MCF 10A (cell line): ENCODE measurements at regions of chr4 and their contacts with region 1.

Region 1: DNA sequence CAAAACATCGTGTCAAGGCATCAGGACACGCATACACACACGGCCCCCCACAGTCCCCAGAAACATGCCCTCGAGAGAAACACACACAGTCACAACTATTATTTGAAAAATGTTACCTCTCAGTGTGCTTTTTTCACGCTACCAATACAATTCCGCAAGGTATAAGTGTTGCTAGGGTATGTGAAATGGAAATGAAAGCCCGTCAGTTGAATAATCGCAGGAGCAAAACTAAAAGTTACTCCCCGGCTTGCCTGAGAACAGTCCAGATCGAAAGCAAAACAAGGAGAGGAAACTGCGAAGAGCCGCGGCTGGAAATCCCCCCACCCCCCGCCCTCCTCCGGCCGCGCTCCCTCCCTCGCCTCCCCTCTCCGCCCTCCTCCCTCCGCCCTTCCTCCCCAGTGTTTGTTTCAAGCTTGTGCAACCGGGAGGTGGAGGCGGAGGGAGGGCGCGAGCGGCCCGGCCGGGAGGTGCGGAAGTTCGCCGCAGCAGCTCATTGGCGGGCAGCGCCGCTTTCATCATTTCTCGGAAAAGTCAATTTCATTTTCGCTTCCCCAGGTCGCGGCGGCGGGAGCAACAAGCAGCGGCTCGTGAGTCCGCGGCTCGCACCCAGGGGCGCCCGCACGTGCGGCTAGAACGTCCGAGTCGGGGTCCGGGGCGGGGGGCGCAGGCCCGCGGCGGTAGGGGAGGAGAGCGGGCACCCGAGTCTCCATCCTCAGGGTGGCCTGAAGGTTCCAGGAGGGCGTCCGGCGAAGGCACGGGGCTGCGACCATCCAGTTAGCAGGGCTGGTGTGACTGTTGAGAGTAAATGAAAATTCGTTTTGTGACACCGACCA is at the start of gene IRF2:
- DNase-seq: peak; percentile 98
- H3K4me3 Mint-ChIP-seq: peak within 1 kb of the TSS; percentile 99
- H3K27ac Mint-ChIP-seq: peak within 1 kb of the TSS; percentile 98
- H3K4me1 Mint-ChIP-seq: peaks cover 23% of the 10 kb centered on the region
- H3K27me3 Mint-ChIP-seq: no peaks in the 10 kb centered on the region
- CTCF ChIP-seq: no peak
- total RNA-seq, gene IRF2: 20.8 and 29.0 TPM in 2 replicates

Region 2: DNA sequence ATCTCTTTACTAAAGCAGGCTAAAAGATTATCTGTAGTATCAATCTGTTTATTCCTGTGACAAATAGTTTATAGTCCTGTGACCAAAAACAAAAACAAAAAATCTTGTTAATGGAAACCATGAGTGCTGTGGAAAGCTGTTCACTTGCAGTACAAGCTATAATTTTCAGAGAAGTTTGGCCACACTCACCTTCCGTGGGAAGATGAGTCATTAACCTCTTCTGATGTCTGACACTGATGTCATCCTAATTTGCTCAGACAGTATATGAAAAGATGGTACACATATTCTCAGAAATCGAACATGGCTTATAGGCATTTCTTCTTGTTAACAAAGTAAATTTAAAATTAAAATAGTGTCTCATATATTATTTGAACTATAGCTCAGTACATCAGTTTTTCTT is 236.9 kb before region 1 on chr4:
- CTCF ChIA-PET with region 1: no interaction called
- POLR2A ChIA-PET with region 1: no interaction called
- intact Hi-C with region 1: no loop called
- DNase-seq: peak; percentile 15
- H3K4me3 Mint-ChIP-seq: no peak overlapping the region
- H3K27ac Mint-ChIP-seq: no peak overlapping the region
- H3K4me1 Mint-ChIP-seq: no peaks in the 10 kb centered on the region
- H3K27me3 Mint-ChIP-seq: no peaks in the 10 kb centered on the region
- CTCF ChIP-seq: no peak

Region 3: DNA sequence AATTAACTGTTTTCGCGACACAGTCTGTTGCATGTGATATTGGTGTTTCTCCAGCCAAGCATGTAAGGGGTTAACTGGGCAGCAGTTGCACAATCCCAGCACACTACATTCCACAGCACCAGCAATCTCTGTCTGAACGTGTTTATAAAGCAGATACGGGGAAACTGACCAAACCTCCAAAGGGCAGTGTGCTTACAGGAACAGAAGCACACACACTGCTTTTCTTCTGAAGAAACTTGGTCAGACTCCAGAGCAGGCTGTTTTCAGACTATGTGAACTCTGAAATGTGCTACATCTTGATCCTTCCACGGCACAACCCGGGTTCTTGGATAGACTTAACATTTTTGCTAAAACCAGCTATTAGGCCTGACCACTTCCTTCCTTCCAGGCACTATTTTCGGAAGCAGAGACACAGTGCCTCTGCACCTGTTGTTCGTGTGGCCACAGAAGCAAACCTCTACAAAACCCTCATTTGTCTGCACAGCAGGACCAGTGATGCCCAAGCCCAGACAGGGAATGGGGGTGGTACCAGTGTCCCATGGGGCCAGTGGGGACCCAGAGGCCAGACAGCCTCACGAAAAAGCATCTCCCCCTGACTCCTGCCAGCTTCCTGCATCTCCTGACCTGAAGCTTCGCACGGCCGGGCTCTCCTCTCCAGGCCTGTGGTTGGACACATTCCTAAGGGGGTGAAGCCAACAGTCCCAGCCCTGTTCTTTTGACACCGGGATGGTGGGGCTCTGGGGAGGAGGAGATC is 90.2 kb before region 1 on chr4:
- CTCF ChIA-PET with region 1: no interaction called
- POLR2A ChIA-PET with region 1: interaction called, 31 read pairs
- intact Hi-C with region 1: loop called (anchors 1 kb)
- DNase-seq: peak; percentile 95
- H3K4me3 Mint-ChIP-seq: peak overlapping the region; percentile 68
- H3K27ac Mint-ChIP-seq: peak overlapping the region; percentile 75
- H3K4me1 Mint-ChIP-seq: peaks cover 28% of the 10 kb centered on the region
- H3K27me3 Mint-ChIP-seq: no peaks in the 10 kb centered on the region
- CTCF ChIP-seq: no peak

Region 4: DNA sequence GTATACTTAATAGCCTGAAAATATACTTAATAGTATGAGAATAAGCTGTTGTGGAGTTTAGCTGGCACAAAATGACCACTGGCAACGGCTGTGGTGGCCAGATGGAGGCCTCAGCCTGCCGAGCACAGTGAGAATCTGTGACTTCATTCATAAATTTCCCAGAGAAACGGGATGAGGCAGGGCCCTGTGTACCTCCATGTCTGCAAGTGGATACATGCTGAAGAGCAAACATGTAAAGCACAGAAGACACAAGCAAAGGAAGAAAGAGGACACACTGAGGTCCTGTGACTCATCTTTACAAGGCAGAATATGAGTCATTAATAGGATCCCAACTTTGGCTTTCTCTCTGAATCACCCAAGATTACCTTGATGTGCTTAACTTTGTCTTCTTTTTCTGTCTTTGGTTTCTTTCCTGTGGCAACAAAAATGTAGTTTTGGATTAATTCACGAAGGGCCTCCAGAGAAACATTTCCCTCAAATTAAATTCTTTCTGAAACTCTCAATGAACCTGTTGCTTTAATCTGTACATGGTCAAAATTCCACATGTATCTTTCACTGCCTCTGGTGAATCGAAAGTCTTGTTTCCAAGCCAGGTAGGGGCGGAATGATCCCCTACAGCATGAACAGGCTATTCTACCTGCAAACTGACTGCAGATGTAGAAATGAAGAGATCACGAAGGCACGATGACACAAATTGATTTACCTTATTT is 56.5 kb before region 1 on chr4:
- CTCF ChIA-PET with region 1: interaction called, 3 read pairs
- POLR2A ChIA-PET with region 1: interaction called, 27 read pairs
- intact Hi-C with region 1: loop called (anchors 5 kb)
- DNase-seq: peak; percentile 95
- H3K4me3 Mint-ChIP-seq: peak overlapping the region; percentile 47
- H3K27ac Mint-ChIP-seq: peak overlapping the region; percentile 47
- H3K4me1 Mint-ChIP-seq: peaks cover 24% of the 10 kb centered on the region
- H3K27me3 Mint-ChIP-seq: no peaks in the 10 kb centered on the region
- CTCF ChIP-seq: no peak

Region 5: GRCh38 chr4:184514121-184514988 is 39.9 kb after region 1 on chr4:
- CTCF ChIA-PET with region 1: interaction called, 8 read pairs
- POLR2A ChIA-PET with region 1: interaction called, 38 read pairs
- intact Hi-C with region 1: no loop called
- DNase-seq: peak; percentile 53
- H3K4me3 Mint-ChIP-seq: no peak overlapping the region
- H3K27ac Mint-ChIP-seq: no peak overlapping the region
- H3K4me1 Mint-ChIP-seq: no peaks in the 10 kb centered on the region
- H3K27me3 Mint-ChIP-seq: no peaks in the 10 kb centered on the region
- CTCF ChIP-seq: no peak

Region 6: DNA sequence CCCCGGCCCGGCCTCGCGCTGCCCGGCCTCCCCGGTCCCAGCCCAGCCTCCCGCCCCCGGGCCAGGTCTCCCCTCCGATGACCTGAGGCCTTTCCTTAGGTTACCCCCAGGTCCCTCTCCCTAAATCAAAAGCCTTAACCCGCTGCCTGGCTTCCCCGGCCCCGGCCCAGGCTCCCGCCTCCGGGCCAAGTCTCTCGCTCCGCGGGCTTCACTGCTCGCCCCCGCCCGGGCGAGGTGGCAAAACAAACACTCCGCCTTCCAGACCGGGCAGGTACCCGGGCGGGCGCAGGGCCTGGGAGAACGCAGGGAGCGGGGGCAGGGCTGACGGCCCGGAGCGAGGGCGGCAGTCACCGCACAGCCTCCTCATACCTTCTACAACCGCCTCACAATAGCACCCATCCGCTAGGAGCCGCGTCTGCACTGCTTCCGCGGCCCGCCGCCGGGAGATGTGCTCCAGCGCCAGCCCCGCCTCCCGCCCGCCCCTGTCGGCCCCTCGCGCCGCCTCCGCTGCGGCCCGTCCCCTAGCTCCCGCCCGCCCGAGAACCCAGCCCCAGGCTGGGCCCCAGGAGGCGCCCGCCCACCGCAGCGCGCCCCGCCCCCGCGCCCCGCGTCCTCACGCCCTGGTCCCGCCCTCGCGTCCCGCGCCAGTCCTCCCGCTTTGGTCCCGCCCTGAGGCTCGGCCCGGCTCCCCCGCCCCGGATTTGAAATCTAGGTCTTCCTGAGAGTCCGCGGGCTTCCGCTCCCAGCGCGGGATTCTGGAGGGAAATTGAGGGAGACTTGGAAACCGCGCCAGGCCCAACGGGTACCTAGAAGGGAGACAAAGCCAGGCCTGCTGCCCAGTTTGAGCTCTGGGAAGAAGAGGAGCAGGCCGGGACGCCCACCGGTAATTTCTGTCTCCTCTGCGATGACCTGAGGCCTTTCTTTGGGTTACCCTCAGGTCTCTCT is 174.8 kb after region 1 on chr4 and contains the starts of genes CASP3 and PRIMPOL:
- CTCF ChIA-PET with region 1: no interaction called
- POLR2A ChIA-PET with region 1: interaction called, 3 read pairs
- intact Hi-C with region 1: loop called (anchors 5 kb)
- DNase-seq: peak; percentile 94
- H3K4me3 Mint-ChIP-seq: peak within 1 kb of the TSS; percentile 81
- H3K27ac Mint-ChIP-seq: peak within 1 kb of the TSS; percentile 78
- H3K4me1 Mint-ChIP-seq: peaks cover 37% of the 10 kb centered on the region
- H3K27me3 Mint-ChIP-seq: no peaks in the 10 kb centered on the region
- CTCF ChIP-seq: no peak
- total RNA-seq, gene CASP3: 27.4 and 28.6 TPM in 2 replicates
- total RNA-seq, gene PRIMPOL: 19.2 and 20.7 TPM in 2 replicates